ENCODE measurements at regions of chr1 and their contacts with region 1.

Region 1: GRCh38 chr1:44636688-44637598 is 37.3 kb downstream of the TMEM53 start:
- DNase-seq: no peak
- H3K4me3 ChIP-seq: no peak overlapping the region
- H3K4me3 Mint-ChIP-seq: no peak overlapping the region
- H3K27ac Mint-ChIP-seq: no peak overlapping the region
- H3K4me1 ChIP-seq: 0 out of 2 replicates have a peak, but pooled peaks cover 4% of the 10 kb centered on the region
- H3K4me1 Mint-ChIP-seq: no peaks in the 10 kb centered on the region
- H3K27me3 ChIP-seq: no peaks in the 10 kb centered on the region
- H3K27me3 Mint-ChIP-seq: no peaks in the 10 kb centered on the region
- CTCF ChIP-seq: no peak

Region 2: DNA sequence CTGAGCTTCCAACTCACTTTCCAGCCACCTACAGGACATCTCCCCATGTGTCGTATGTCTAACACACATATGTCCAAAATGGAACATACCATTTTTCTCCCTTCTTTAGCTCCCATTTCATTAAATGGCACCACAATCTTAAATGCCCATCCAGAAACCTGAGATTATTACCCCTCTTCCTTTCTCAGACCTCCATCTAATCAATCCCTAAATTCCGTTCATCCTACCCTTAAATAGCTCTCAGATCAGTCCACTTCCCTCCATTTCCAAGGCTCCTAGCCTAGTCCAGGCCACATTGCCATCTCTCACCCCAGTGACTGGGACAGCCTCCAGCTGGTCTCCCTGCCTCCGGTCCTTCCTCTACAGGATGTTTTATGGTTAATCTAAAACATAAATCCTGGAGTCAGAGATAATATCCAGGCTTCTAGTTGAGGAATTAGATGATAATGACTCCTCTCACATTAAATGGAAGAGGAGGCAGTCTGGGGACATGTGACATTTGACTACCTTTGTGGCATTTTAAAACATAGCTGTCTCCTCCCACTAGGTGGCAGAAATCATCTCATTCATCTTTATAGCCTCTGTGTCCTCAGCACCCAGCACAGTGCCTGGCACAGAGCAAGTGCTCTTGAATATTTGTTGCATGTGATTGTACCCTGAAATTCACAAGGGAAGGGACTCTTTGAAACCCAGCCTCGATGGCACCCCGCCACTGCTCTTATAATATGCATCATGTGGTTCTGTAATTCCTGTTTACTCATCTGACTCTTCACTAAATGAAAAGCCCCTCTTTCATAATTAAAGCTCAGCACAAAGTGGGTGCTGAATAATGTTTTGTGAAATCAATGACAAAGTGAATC is 65.0 kb before region 1 on chr1:
- CTCF ChIA-PET with region 1: no interaction called
- POLR2A ChIA-PET with region 1: no interaction called
- intact Hi-C with region 1: no loop called
- DNase-seq: peak in 1 of 2 experiments; percentile 6
- H3K4me3 ChIP-seq: no peak overlapping the region
- H3K4me3 Mint-ChIP-seq: no peak overlapping the region
- H3K27ac Mint-ChIP-seq: no peak overlapping the region
- H3K4me1 ChIP-seq: peaks cover 14% of the 10 kb centered on the region
- H3K4me1 Mint-ChIP-seq: peaks cover 10% of the 10 kb centered on the region
- H3K27me3 ChIP-seq: no peaks in the 10 kb centered on the region
- H3K27me3 Mint-ChIP-seq: no peaks in the 10 kb centered on the region
- CTCF ChIP-seq: peak in 1 of 2 experiments; percentile 60

Region 3: GRCh38 chr1:44707112-44707881 is 70.4 kb after region 1 on chr1:
- CTCF ChIA-PET with region 1: interaction called, 11 read pairs
- POLR2A ChIA-PET with region 1: no interaction called
- intact Hi-C with region 1: no loop called
- DNase-seq: no peak
- H3K4me3 ChIP-seq: no peak overlapping the region
- H3K4me3 Mint-ChIP-seq: no peak overlapping the region
- H3K27ac Mint-ChIP-seq: no peak overlapping the region
- H3K4me1 ChIP-seq: no peaks in the 10 kb centered on the region
- H3K4me1 Mint-ChIP-seq: no peaks in the 10 kb centered on the region
- H3K27me3 ChIP-seq: no peaks in the 10 kb centered on the region
- H3K27me3 Mint-ChIP-seq: no peaks in the 10 kb centered on the region
- CTCF ChIP-seq: no peak

Region 4: DNA sequence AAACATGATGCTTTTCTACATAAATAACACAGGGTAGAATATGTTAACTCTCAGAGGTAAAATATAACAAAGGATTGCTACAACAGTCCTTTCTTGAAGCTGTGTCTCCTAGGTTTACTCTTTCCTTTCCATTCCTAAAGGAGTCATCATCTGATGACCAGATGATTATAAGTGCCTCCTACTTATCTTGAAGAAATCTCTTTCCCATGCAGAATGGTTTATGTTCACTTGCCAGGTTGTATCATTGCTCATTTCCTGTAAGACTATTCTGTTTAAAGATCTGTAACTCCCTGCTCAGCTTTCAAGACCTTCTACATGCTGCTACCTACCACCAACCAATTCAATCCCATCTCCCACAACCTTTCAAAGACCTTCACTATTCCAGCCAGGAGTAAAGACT is 257.6 kb after region 1 on chr1:
- CTCF ChIA-PET with region 1: no interaction called
- POLR2A ChIA-PET with region 1: no interaction called
- intact Hi-C with region 1: no loop called
- DNase-seq: no peak
- H3K4me3 ChIP-seq: no peak overlapping the region
- H3K4me3 Mint-ChIP-seq: no peak overlapping the region
- H3K27ac Mint-ChIP-seq: no peak overlapping the region
- H3K4me1 ChIP-seq: no peaks in the 10 kb centered on the region
- H3K4me1 Mint-ChIP-seq: no peaks in the 10 kb centered on the region
- H3K27me3 ChIP-seq: no peaks in the 10 kb centered on the region
- H3K27me3 Mint-ChIP-seq: no peaks in the 10 kb centered on the region
- CTCF ChIP-seq: no peak